Esophagus squamous epithelium (tissue), 5 donors: ENCODE measurements at regions of chr12 and their contacts with region 1.

Region 1: GRCh38 chr12:106149096-106149784 is 10.5 kb upstream of the NUAK1 start:
- DNase-seq: no peak
- H3K4me3 ChIP-seq: no peak overlapping the region
- H3K27ac ChIP-seq: no peak overlapping the region
- H3K4me1 ChIP-seq: peaks cover 0 to 8% (median 0%) of the 10 kb centered on the region in 3 donors
- H3K27me3 ChIP-seq: peaks cover 0 to 3% (median 0%) of the 10 kb centered on the region in 4 donors
- CTCF ChIP-seq: peak in 5 of 6 experiments; percentile 35 to 62 (median 49)
- POLR2A ChIP-seq: no peak

Region 2: GRCh38 chr12:105420659-105421240 is 728.5 kb before region 1 on chr12:
- intact Hi-C with region 1: loop called (anchors 5 kb)
- DNase-seq: no peak
- H3K4me3 ChIP-seq: no peak overlapping the region
- H3K27ac ChIP-seq: no peak overlapping the region
- H3K4me1 ChIP-seq: no peaks in the 10 kb centered on the region
- H3K27me3 ChIP-seq: peaks cover 0 to under 1% (median 0%) of the 10 kb centered on the region in 4 donors
- CTCF ChIP-seq: peak; percentile 70 to 95 (median 90)
- POLR2A ChIP-seq: no peak